Caco-2 (cell line): ENCODE measurements at regions of chr13 and their contacts with region 1.

Region 1: DNA sequence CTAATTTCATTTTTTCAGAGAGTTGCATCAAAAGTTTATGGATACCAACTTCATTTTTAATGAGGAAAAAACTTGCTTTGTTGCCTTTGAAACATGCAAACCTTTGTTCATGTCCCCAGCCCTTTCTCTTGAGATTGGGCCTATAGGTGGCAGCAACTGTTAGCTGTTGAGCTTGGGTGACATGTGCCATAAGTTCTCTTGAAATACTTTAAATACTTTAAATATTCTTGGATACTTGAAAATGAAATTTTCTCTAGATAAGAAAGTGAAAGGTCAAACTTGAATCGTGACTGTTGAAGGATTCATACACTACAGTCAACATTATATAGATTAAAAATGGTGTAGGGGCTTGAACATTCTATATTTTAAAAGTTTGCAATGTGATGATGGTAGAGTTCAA is 294.9 kb downstream of the NDFIP2 start:
- DNase-seq: peak; percentile 81 to 85
- H3K4me3 ChIP-seq: no peak overlapping the region
- H3K4me3 Mint-ChIP-seq: no peak overlapping the region
- H3K27ac Mint-ChIP-seq: peak overlapping the region; percentile 69
- H3K4me1 ChIP-seq: peaks cover 63% of the 10 kb centered on the region
- H3K4me1 Mint-ChIP-seq: peaks cover 56% of the 10 kb centered on the region
- H3K27me3 ChIP-seq: no peaks in the 10 kb centered on the region
- H3K27me3 Mint-ChIP-seq: no peaks in the 10 kb centered on the region
- CTCF ChIP-seq: peak; percentile 78 to 87

Region 2: DNA sequence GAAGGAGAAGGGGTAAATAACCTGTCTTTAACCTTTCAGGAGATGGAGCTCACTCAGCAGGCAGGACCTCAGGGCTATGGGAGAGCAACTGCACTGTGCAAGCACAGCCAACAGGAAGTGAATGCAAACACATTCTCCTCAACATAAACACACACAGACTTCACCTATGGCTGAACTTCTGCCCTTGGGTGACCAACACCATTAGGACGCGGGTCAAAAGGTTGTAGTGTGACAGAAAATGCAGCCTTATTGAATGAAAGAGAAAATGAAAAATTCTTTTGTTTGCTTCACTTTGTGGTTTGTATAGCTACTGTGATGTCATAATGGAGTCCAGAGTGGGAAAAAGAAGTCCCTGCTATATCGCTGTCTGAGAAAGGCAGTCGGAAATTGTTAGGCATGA is 28.2 kb after region 1 on chr13:
- CTCF ChIA-PET with region 1: no interaction called
- POLR2A ChIA-PET with region 1: no interaction called
- intact Hi-C with region 1: no loop called
- DNase-seq: no peak
- H3K4me3 ChIP-seq: no peak overlapping the region
- H3K4me3 Mint-ChIP-seq: no peak overlapping the region
- H3K27ac Mint-ChIP-seq: no peak overlapping the region
- H3K4me1 ChIP-seq: peaks cover 20% of the 10 kb centered on the region
- H3K4me1 Mint-ChIP-seq: peaks cover 17% of the 10 kb centered on the region
- H3K27me3 ChIP-seq: no peaks in the 10 kb centered on the region
- H3K27me3 Mint-ChIP-seq: no peaks in the 10 kb centered on the region
- CTCF ChIP-seq: no peak

Region 3: GRCh38 chr13:79861731-79862130 is 85.9 kb after region 1 on chr13:
- CTCF ChIA-PET with region 1: interaction called, 3 read pairs
- POLR2A ChIA-PET with region 1: no interaction called
- intact Hi-C with region 1: loop called (anchors 1 kb)
- DNase-seq: peak; percentile 90 to 95
- H3K4me3 ChIP-seq: no peak overlapping the region
- H3K4me3 Mint-ChIP-seq: peak overlapping the region; percentile 65
- H3K27ac Mint-ChIP-seq: peak overlapping the region; percentile 69
- H3K4me1 ChIP-seq: peaks cover 37% of the 10 kb centered on the region
- H3K4me1 Mint-ChIP-seq: peaks cover 45% of the 10 kb centered on the region
- H3K27me3 ChIP-seq: no peaks in the 10 kb centered on the region
- H3K27me3 Mint-ChIP-seq: no peaks in the 10 kb centered on the region
- CTCF ChIP-seq: no peak

Region 4: DNA sequence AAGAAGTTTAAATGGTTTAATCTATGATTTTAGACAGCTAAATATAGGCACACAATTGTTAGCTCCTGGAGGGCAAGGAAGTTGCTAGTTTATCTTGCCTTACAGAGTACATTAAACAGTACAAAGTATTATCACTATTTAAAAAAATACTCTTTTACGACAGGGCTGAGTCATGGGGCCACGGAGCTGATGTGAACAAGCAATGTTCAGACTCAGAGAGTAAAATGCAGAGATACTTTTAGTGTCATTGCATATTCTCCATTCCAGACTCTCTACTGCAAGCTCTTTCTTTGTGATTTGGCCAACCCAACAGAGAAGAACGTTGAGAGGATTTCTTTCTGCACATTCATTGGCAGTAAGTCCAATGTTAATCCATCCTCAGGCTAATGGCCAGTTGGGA is 212.7 kb after region 1 on chr13:
- CTCF ChIA-PET with region 1: no interaction called
- POLR2A ChIA-PET with region 1: no interaction called
- intact Hi-C with region 1: loop called (anchors 5 kb)
- DNase-seq: peak in 1 of 2 experiments; percentile 16
- H3K4me3 ChIP-seq: no peak overlapping the region
- H3K4me3 Mint-ChIP-seq: no peak overlapping the region
- H3K27ac Mint-ChIP-seq: peak overlapping the region; percentile 69
- H3K4me1 ChIP-seq: peaks cover 22% of the 10 kb centered on the region
- H3K4me1 Mint-ChIP-seq: peaks cover 46% of the 10 kb centered on the region
- H3K27me3 ChIP-seq: no peaks in the 10 kb centered on the region
- H3K27me3 Mint-ChIP-seq: no peaks in the 10 kb centered on the region
- CTCF ChIP-seq: no peak

Region 5: DNA sequence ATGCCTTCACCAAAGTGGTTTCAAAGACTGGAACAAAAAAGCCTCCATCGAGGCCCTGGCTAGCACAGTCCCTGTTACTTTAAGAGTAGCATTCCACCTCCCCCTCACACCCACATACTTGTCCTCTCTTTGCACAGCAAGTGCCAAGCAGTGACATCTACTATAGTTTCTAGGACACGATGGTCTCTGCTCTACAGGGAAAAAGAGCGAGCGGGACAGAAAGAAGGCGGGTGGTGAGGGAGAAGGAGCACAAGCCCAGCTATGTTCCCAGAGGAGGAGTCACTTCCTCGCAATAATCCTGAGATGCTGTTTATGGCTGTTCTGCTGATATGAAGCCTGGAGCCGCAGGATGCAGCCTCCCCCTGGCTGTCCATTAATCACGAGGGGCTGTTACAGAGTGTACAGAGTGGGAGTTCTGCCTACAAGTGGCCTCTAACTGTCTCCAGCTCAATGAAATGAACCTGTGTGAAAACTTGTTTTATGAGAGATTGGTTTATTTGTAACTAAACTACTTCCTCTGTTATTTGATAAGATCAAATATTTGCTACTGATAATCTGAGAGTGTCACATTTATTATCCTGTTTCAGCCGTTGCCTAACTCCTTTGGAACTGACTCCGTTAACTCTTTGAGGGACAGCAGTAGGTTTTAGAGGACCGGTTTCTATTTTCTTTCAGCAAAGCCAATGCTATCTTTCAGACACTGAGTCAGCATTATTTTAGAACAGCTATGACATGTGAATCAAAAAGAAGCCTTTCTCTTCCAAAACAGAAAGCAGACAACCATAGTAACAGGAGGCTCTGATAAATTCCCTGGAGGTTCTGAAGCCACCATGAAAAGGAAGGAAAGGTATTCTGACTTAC is 357.1 kb after region 1 on chr13:
- CTCF ChIA-PET with region 1: no interaction called
- POLR2A ChIA-PET with region 1: no interaction called
- intact Hi-C with region 1: loop called (anchors 1 kb)
- DNase-seq: peak; percentile 87 to 96
- H3K4me3 ChIP-seq: 0 out of 2 replicates have a peak overlapping the region, but pooled peaks have one; percentile 13
- H3K4me3 Mint-ChIP-seq: peak overlapping the region; percentile 74
- H3K27ac Mint-ChIP-seq: peak overlapping the region; percentile 91
- H3K4me1 ChIP-seq: peaks cover 28% of the 10 kb centered on the region
- H3K4me1 Mint-ChIP-seq: peaks cover 24% of the 10 kb centered on the region
- H3K27me3 ChIP-seq: no peaks in the 10 kb centered on the region
- H3K27me3 Mint-ChIP-seq: peaks cover 2% of the 10 kb centered on the region
- CTCF ChIP-seq: no peak

Region 6: GRCh38 chr13:80363890-80364503 is 588.2 kb after region 1 on chr13:
- CTCF ChIA-PET with region 1: no interaction called
- POLR2A ChIA-PET with region 1: no interaction called
- intact Hi-C with region 1: loop called (anchors 1 kb)
- DNase-seq: peak in 1 of 2 experiments; percentile 39
- H3K4me3 ChIP-seq: no peak overlapping the region
- H3K4me3 Mint-ChIP-seq: no peak overlapping the region
- H3K27ac Mint-ChIP-seq: no peak overlapping the region
- H3K4me1 ChIP-seq: peaks cover 26% of the 10 kb centered on the region
- H3K4me1 Mint-ChIP-seq: peaks cover 16% of the 10 kb centered on the region
- H3K27me3 ChIP-seq: no peaks in the 10 kb centered on the region
- H3K27me3 Mint-ChIP-seq: no peaks in the 10 kb centered on the region
- CTCF ChIP-seq: peak; percentile 83 to 85